Activated CD8-positive, alpha-beta T cell treated with anti-CD3 and anti-CD28 coated beads for 36 hours (primary cell): ENCODE measurements at regions of chr9 and their contacts with region 1.

Region 1: GRCh38 chr9:126690431-126691350 is 77.0 kb downstream of the LMX1B start:
- DNase-seq: peak; percentile 75
- ATAC-seq: peak; percentile 92
- H3K4me3 Mint-ChIP-seq: no peak overlapping the region
- H3K27ac Mint-ChIP-seq: no peak overlapping the region
- H3K4me1 Mint-ChIP-seq: no peaks in the 10 kb centered on the region
- H3K27me3 Mint-ChIP-seq: peaks cover 21% of the 10 kb centered on the region
- CTCF ChIP-seq: peak; percentile 70

Region 2: DNA sequence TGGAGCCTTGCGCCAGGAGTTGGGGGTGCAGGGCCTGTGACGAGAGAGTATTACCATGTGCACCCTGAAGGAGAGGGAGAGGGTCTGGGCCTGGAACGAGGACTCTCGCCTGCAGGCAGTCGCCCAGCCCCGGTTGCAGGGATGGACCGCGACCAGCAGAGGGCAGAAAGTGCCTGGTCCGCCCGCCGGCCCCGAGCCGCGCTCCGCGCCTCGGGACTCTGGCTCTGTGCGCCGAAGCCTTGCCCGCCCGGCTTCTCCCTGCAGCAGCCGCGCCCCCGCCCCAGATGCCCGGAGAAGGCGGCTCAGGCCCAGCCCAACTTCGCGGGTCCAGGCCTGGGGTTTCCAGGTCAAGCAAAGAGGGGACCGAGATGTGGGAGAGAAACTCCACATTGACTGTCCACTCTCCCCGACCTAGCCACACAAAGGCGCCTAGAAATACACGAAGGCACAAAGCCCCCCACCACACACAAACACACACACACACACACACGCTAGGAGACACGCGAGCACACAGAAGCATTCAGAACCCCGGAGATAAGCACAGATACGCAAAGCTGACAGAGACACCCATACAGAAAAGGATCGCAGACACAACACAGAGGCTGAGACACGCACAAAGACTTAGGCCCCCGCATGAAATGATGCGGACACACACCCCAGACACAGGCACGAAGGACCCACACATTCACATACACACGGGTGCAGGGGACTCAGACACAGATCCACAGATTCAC is 78.9 kb before region 1 on chr9:
- CTCF ChIA-PET with region 1: interaction called, 15 read pairs
- POLR2A ChIA-PET with region 1: no interaction called
- intact Hi-C with region 1: loop called (anchors 5 kb)
- DNase-seq: peak; percentile 80
- ATAC-seq: peak; percentile 90
- H3K4me3 Mint-ChIP-seq: peak overlapping the region; percentile 1
- H3K27ac Mint-ChIP-seq: no peak overlapping the region
- H3K4me1 Mint-ChIP-seq: peaks cover 20% of the 10 kb centered on the region
- H3K27me3 Mint-ChIP-seq: peaks cover 68% of the 10 kb centered on the region
- CTCF ChIP-seq: peak; percentile 92

Region 3: GRCh38 chr9:126618585-126619360 is 71.9 kb before region 1 on chr9:
- CTCF ChIA-PET with region 1: interaction called, 10 read pairs
- POLR2A ChIA-PET with region 1: no interaction called
- intact Hi-C with region 1: loop called (anchors 5 kb)
- DNase-seq: no peak
- ATAC-seq: no peak
- H3K4me3 Mint-ChIP-seq: no peak overlapping the region
- H3K27ac Mint-ChIP-seq: no peak overlapping the region
- H3K4me1 Mint-ChIP-seq: peaks cover 15% of the 10 kb centered on the region
- H3K27me3 Mint-ChIP-seq: peaks cover 81% of the 10 kb centered on the region
- CTCF ChIP-seq: no peak

Region 4: GRCh38 chr9:126673689-126674364 is 16.9 kb before region 1 on chr9:
- CTCF ChIA-PET with region 1: interaction called, 28 read pairs
- POLR2A ChIA-PET with region 1: no interaction called
- intact Hi-C with region 1: no loop called
- DNase-seq: no peak
- ATAC-seq: no peak
- H3K4me3 Mint-ChIP-seq: no peak overlapping the region
- H3K27ac Mint-ChIP-seq: no peak overlapping the region
- H3K4me1 Mint-ChIP-seq: peaks cover 6% of the 10 kb centered on the region
- H3K27me3 Mint-ChIP-seq: peaks cover 48% of the 10 kb centered on the region
- CTCF ChIP-seq: no peak

Region 5: GRCh38 chr9:126722252-126723078 is 31.8 kb after region 1 on chr9:
- CTCF ChIA-PET with region 1: no interaction called
- POLR2A ChIA-PET with region 1: no interaction called
- intact Hi-C with region 1: no loop called
- DNase-seq: peak; percentile 92
- ATAC-seq: peak; percentile 78
- H3K4me3 Mint-ChIP-seq: peak overlapping the region; percentile 79
- H3K27ac Mint-ChIP-seq: peak overlapping the region; percentile 88
- H3K4me1 Mint-ChIP-seq: peaks cover 43% of the 10 kb centered on the region
- H3K27me3 Mint-ChIP-seq: no peaks in the 10 kb centered on the region
- CTCF ChIP-seq: no peak

Region 6: GRCh38 chr9:126773004-126773607 is 82.4 kb after region 1 on chr9:
- CTCF ChIA-PET with region 1: interaction called, 11 read pairs
- POLR2A ChIA-PET with region 1: no interaction called
- intact Hi-C with region 1: no loop called
- DNase-seq: peak; percentile 41
- ATAC-seq: peak; percentile 53
- H3K4me3 Mint-ChIP-seq: no peak overlapping the region
- H3K27ac Mint-ChIP-seq: no peak overlapping the region
- H3K4me1 Mint-ChIP-seq: peaks cover 2% of the 10 kb centered on the region
- H3K27me3 Mint-ChIP-seq: peaks cover 13% of the 10 kb centered on the region
- CTCF ChIP-seq: peak; percentile 31

Region 7: DNA sequence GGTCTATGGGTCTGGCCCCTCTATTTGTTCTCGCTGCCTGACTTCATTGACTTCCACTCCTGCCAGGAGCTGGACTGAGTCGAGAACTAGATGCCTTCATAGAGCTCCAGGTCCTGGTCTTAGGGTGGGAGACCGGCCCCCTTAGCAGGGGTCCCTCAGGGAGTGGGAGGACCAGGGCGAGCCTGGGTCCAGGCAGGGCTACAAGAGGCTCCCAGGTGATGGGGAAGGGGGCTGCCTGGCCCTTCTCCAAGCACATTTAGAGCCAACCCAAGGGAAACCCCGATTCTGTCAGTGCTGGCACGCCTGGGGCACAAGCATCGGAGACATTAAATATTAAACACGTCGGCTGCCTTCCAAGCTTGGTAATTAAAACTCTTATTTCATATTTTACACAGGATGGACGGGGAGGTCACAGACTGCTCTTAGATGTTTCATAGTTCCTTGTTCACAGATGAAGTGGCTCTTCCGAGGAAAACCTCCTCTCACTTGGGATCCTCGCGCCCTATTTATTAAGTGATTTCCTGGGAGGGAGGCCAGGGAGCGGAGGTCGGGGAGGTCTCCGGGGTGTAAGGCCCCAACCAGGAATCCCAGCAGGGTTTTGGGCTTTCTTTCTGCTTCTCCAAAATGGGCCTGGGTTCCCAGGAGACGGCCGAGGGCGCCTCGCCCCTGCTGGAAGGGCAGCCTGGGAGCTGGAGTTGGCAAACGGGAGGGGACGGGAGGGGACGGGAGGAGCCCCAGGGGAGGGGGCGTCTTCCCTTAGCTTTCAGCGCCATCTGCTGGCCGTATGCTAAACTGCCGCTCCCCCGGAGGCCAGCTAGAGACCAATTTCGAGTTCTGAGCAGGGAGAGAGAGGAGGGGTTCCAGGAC is 90.7 kb after region 1 on chr9:
- CTCF ChIA-PET with region 1: interaction called, 18 read pairs
- POLR2A ChIA-PET with region 1: no interaction called
- intact Hi-C with region 1: no loop called
- DNase-seq: peak; percentile 88
- ATAC-seq: peak; percentile 96
- H3K4me3 Mint-ChIP-seq: no peak overlapping the region
- H3K27ac Mint-ChIP-seq: no peak overlapping the region
- H3K4me1 Mint-ChIP-seq: no peaks in the 10 kb centered on the region
- H3K27me3 Mint-ChIP-seq: peaks cover 14% of the 10 kb centered on the region
- CTCF ChIP-seq: peak; percentile 97

Region 8: GRCh38 chr9:126838895-126839294 is 148.2 kb after region 1 on chr9:
- CTCF ChIA-PET with region 1: no interaction called
- POLR2A ChIA-PET with region 1: no interaction called
- intact Hi-C with region 1: no loop called
- DNase-seq: peak; percentile 19
- ATAC-seq: peak; percentile 51
- H3K4me3 Mint-ChIP-seq: no peak overlapping the region
- H3K27ac Mint-ChIP-seq: no peak overlapping the region
- H3K4me1 Mint-ChIP-seq: peaks cover 41% of the 10 kb centered on the region
- H3K27me3 Mint-ChIP-seq: no peaks in the 10 kb centered on the region
- CTCF ChIP-seq: no peak